Activated CD4-positive, alpha-beta T cell treated with anti-CD3 and anti-CD28 coated beads for 36 hours (primary cell): ENCODE measurements at regions of chr14 and their contacts with region 1.

Region 1: GRCh38 chr14:91919814-91920213 is 27.7 kb downstream of the FBLN5 start:
- DNase-seq: no peak
- ATAC-seq: no peak
- H3K4me3 Mint-ChIP-seq: no peak overlapping the region
- H3K27ac Mint-ChIP-seq: no peak overlapping the region
- H3K4me1 Mint-ChIP-seq: no peaks in the 10 kb centered on the region
- H3K27me3 Mint-ChIP-seq: peaks cover 2% of the 10 kb centered on the region

Region 2: DNA sequence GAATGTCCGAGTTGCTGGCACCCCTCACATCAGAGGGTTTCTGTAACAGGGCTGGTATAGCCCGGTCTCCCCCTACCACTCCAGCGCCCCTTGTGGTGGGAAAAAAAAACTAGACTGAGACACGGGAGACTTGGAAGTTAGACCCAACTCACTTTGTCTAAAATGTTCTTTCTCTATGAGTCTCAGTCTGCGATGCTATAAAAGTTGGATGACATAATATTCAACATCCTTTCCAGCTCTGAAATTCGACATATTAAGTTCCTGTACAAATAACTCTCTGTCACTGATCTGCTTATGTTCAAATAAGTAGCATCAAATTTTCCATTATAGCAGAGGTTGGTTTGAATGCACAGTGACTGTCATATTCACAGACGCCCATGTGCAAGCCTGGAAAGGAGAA is 26.8 kb before region 1 on chr14:
- CTCF ChIA-PET with region 1: no interaction called
- POLR2A ChIA-PET with region 1: no interaction called
- intact Hi-C with region 1: loop called in 1 of 2 experiments (anchors 1 kb)
- DNase-seq: peak; percentile 53
- ATAC-seq: peak; percentile 53
- H3K4me3 Mint-ChIP-seq: no peak overlapping the region
- H3K27ac Mint-ChIP-seq: peak overlapping the region; percentile 89
- H3K4me1 Mint-ChIP-seq: peaks cover 51% of the 10 kb centered on the region
- H3K27me3 Mint-ChIP-seq: no peaks in the 10 kb centered on the region